ENCODE measurements at regions of chr12 and their contacts with region 1.

Region 1: DNA sequence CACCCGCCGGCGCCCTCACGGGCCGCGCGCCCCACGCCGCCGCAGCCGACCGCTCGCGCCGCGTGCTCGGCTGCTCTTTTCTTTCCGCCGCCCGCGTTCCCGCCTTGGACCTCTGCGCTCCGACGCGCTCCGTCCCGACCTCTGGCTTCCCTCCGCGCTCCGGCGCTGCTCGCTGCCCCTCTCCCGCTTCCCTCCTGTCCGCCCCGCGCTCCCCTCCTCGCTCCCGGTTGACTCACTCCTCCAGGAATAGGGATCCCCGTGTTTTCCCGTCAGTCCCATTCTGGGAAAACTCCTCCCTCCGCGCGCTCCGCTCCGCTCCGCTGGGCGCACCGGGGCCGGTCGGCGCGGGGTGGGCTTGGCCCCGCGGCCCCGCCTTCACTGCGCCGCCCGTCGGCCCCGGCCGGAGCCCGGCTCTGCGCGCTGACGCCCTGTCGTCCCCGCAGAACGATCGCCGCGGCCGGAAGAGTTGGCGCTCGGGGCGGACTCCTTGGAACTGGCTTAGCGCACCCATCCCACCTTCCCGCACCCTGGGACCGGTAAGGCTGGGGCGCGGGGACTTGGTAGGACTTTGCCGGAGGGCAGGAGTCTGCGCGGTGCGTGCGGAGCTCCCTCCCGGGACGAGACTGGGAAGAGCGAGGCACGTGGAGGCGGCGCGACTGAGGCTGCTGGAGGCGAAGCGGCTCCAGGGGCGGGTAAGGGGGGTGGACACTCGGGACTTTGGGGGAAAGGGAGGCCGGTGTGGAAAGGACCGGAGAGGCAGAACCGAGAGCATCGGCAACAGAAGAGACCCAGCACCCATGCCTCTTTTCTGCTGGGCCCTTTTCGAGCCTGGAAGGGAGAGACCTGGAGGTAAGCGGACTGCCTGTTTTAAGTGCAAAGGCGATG is 550 bp downstream of the TEAD4 start:
- DNase-seq: peak; percentile 54 to 67 (median 63)
- ATAC-seq: peak; percentile 83
- H3K4me3 ChIP-seq: peak overlapping the region; percentile 65
- H3K27ac ChIP-seq: peak overlapping the region; percentile 78
- H3K4me1 ChIP-seq: peaks cover 25 to 39% of the 10 kb centered on the region in 2 experiments; a peak in 4 of 5 replicates
- H3K27me3 ChIP-seq: no peaks in the 10 kb centered on the region
- CTCF ChIP-seq: 0 out of 6 replicates have a peak, but pooled peaks of 1 of the 3 experiments have one; percentile 4
- EP300 ChIP-seq: no peak
- POLR2A ChIP-seq: 0 out of 2 replicates have a peak, but pooled peaks have one; percentile 37
- RAD21 ChIP-seq: no peak

Region 2: GRCh38 chr12:2642176-2642892 is 317.4 kb before region 1 on chr12:
- CTCF ChIA-PET with region 1: no interaction called
- POLR2A ChIA-PET with region 1: no interaction called
- in situ Hi-C with region 1: no loop called
- intact Hi-C with region 1: no loop called
- DNase-seq: no peak
- ATAC-seq: no peak
- H3K4me3 ChIP-seq: no peak overlapping the region
- H3K27ac ChIP-seq: no peak overlapping the region
- H3K4me1 ChIP-seq: no peaks in the 10 kb centered on the region; a peak in 1 of 5 replicates
- H3K27me3 ChIP-seq: peaks cover 0 to 35% of the 10 kb centered on the region in 2 experiments; a peak in 4 of 5 replicates
- CTCF ChIP-seq: no peak
- EP300 ChIP-seq: no peak
- POLR2A ChIP-seq: no peak
- RAD21 ChIP-seq: no peak

Region 3: GRCh38 chr12:2825132-2825531 is 134.6 kb before region 1 on chr12:
- CTCF ChIA-PET with region 1: no interaction called
- POLR2A ChIA-PET with region 1: no interaction called
- in situ Hi-C with region 1: no loop called
- intact Hi-C with region 1: no loop called
- DNase-seq: no peak
- ATAC-seq: no peak
- H3K4me3 ChIP-seq: no peak overlapping the region
- H3K27ac ChIP-seq: no peak overlapping the region
- H3K4me1 ChIP-seq: no peaks in the 10 kb centered on the region
- H3K27me3 ChIP-seq: no peaks in the 10 kb centered on the region
- CTCF ChIP-seq: no peak
- EP300 ChIP-seq: no peak
- POLR2A ChIP-seq: no peak
- RAD21 ChIP-seq: no peak

Region 4: DNA sequence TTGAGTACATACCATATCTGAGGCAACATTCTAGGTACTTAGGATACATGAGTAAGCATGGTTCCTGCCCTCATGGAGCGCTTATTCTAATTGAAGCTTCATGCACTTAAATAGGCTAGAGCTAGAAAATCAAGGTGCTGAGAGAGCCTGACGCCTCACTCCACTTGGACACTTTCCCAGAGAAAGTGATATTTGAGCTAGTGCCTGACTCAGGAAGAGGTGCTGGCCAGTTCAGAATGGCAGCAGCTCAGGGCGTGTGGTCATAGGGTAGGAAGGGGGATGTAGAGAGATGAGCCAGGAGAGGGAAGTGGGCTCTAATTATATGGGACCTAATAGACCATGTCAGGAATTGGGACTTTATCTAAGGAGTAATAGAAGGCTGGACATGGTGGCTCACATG is 35.7 kb before region 1 on chr12:
- CTCF ChIA-PET with region 1: no interaction called
- POLR2A ChIA-PET with region 1: no interaction called
- in situ Hi-C with region 1: no loop called
- intact Hi-C with region 1: no loop called
- DNase-seq: no peak
- ATAC-seq: no peak
- H3K4me3 ChIP-seq: no peak overlapping the region
- H3K27ac ChIP-seq: no peak overlapping the region
- H3K4me1 ChIP-seq: no peaks in the 10 kb centered on the region
- H3K27me3 ChIP-seq: no peaks in the 10 kb centered on the region
- CTCF ChIP-seq: no peak
- EP300 ChIP-seq: no peak
- POLR2A ChIP-seq: no peak
- RAD21 ChIP-seq: no peak

Region 5: GRCh38 chr12:2998789-2999264 is 39.1 kb after region 1 on chr12:
- CTCF ChIA-PET with region 1: no interaction called
- POLR2A ChIA-PET with region 1: interaction called, 3 read pairs
- in situ Hi-C with region 1: no loop called
- intact Hi-C with region 1: loop called (anchors 5 kb)
- DNase-seq: peak; percentile 88 to 93 (median 90)
- ATAC-seq: peak; percentile 98
- H3K4me3 ChIP-seq: peak overlapping the region; percentile 26; the same call in 1 of the 2 replicates
- H3K27ac ChIP-seq: peak overlapping the region; percentile 94
- H3K4me1 ChIP-seq: peaks cover 19 to 31% of the 10 kb centered on the region in 2 experiments
- H3K27me3 ChIP-seq: no peaks in the 10 kb centered on the region
- CTCF ChIP-seq: no peak
- EP300 ChIP-seq: peak; percentile 59; the same call in 1 of the 2 replicates
- POLR2A ChIP-seq: no peak
- RAD21 ChIP-seq: no peak

Region 6: GRCh38 chr12:3010214-3010930 is 50.6 kb after region 1 on chr12:
- CTCF ChIA-PET with region 1: no interaction called
- POLR2A ChIA-PET with region 1: no interaction called
- in situ Hi-C with region 1: no loop called
- intact Hi-C with region 1: no loop called
- DNase-seq: no peak
- ATAC-seq: no peak
- H3K4me3 ChIP-seq: no peak overlapping the region
- H3K27ac ChIP-seq: no peak overlapping the region
- H3K4me1 ChIP-seq: peaks cover 0 to 8% of the 10 kb centered on the region in 2 experiments; a peak in 1 of 5 replicates
- H3K27me3 ChIP-seq: no peaks in the 10 kb centered on the region
- CTCF ChIP-seq: no peak
- EP300 ChIP-seq: no peak
- POLR2A ChIP-seq: no peak
- RAD21 ChIP-seq: no peak

Measured in K562 (cell line).